Pancreas (tissue), 10 donors: ENCODE measurements at regions of chr6 and their contacts with region 1.

Region 1: DNA sequence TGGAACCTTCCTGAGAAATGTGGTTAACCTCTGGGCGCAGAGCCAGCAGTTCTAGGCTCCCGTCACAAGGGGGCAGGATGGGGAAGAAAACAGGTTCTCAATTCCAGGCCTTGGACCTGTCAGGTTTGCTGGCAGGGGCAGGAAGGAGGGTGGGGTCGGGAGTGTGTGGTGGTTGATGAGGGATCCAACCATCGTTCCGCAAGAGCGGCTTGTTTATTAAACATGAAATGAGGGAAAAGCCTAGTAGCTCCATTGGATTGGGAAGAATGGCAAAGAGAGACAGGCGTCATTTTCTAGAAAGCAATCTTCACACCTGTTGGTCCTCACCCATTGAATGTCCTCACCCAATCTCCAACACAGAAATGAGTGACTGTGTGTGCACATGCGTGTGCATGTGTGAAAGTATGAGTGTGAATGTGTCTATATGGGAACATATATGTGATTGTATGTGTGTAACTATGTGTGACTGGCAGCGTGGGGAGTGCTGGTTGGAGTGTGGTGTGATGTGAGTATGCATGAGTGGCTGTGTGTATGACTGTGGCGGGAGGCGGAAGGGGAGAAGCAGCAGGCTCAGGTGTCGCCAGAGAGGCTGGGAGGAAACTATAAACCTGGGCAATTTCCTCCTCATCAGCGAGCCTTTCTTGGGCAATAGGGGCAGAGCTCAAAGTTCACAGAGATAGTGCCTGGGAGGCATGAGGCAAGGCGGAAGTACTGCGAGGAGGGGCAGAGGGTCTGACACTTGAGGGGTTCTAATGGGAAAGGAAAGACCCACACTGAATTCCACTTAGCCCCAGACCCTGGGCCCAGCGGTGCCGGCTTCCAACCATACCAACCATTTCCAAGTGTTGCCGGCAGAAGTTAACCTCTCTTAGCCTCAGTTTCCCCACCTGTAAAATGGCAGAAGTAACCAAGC is 29.6 kb downstream of the SRSF3 start:
- DNase-seq: peak; percentile 80 to 94 (median 92)
- ATAC-seq: peak; percentile 73 to 85 (median 84)
- H3K4me3 ChIP-seq: no peak overlapping the region
- H3K27ac ChIP-seq: peak overlapping the region in 2 of 4 donors; percentile 12 to 25
- H3K4me1 ChIP-seq: peaks cover 0 to 21% (median 5%) of the 10 kb centered on the region in 3 donors
- H3K27me3 ChIP-seq: no peaks in the 10 kb centered on the region
- CTCF ChIP-seq: peak; percentile 79 to 86 (median 80)

Region 2: DNA sequence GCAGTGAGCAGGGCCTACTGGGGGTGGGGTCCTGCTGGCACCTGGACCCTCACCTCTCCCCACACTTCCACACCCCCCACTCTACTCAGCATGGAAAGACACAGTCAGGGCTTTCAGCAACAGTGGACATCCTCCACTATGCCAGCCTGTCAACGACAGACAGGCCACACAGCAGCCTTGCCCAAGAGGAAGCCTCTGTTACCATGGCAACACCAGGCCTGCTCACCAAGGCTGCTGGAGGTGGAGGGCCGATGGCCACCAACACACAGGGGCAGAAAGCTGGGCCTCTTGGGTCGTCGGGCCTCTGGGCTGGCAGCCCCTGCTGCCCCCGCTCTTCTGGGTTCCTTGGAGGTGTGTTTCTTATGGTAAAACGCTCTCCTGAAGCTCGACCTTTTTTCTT is 300.7 kb before region 1 on chr6:
- intact Hi-C with region 1: no loop called
- DNase-seq: no peak
- ATAC-seq: peak in 1 of 4 donors; percentile 7
- H3K4me3 ChIP-seq: no peak overlapping the region
- H3K27ac ChIP-seq: no peak overlapping the region
- H3K4me1 ChIP-seq: peaks cover 0 to 7% (median 0%) of the 10 kb centered on the region in 3 donors
- H3K27me3 ChIP-seq: no peaks in the 10 kb centered on the region
- CTCF ChIP-seq: no peak

Region 3: DNA sequence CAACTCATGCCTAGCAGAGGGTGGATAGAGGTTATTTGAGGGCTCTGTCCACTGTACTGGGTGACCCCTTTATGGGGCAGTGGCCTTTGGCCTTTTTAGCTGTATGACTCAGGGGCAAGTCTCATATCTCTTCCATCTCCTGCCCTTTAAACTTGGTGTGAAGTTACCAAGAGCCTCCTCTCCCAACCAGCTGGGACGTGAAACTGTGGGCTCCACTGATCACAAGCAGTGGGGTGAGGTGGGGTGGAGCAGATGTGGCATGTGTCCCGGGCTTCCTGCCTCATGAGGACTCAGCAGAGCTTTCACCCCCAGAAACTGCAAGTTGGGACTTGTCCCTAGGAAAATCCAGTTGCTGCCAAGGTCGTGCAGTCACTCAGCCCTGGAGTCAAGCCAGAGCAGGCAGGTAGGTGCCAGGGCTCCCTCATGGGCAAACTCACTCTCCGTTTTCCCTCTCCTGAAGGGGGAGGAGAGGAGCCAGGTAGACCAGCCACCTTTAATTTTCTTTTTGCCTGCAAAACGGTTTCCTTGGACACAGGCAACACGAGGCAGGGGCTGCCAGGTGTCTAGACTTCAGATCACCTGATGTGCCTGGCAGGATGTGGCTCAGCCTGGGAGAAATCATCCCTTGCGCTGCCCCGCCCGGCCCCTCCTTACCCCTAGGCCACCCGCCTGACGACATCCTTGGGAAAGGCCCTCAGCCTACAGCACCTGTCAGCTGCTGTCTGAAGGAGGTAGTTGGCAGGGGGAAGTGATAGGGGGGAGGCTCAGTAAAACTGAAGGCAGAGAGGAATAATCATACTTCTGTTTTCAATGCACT is 58.7 kb after region 1 on chr6:
- intact Hi-C with region 1: loop called in 2 of 3 experiments (anchors 5 kb)
- DNase-seq: peak; percentile 84 to 95 (median 93)
- ATAC-seq: peak; percentile 8 to 46 (median 34)
- H3K4me3 ChIP-seq: peak overlapping the region in 2 of 4 donors; percentile 76 to 82
- H3K27ac ChIP-seq: peak overlapping the region; percentile 33 to 97 (median 77)
- H3K4me1 ChIP-seq: peaks cover 13 to 33% (median 24%) of the 10 kb centered on the region in 3 donors
- H3K27me3 ChIP-seq: no peaks in the 10 kb centered on the region
- CTCF ChIP-seq: no peak

Region 4: GRCh38 chr6:36724514-36725390 is 100.9 kb after region 1 on chr6:
- intact Hi-C with region 1: loop called in 2 of 3 experiments (anchors 5 to 10 kb)
- DNase-seq: peak; percentile 76 to 88 (median 83)
- ATAC-seq: peak; percentile 84 to 97 (median 92)
- H3K4me3 ChIP-seq: no peak overlapping the region
- H3K27ac ChIP-seq: no peak overlapping the region
- H3K4me1 ChIP-seq: no peaks in the 10 kb centered on the region
- H3K27me3 ChIP-seq: no peaks in the 10 kb centered on the region
- CTCF ChIP-seq: peak in 3 of 4 donors; percentile 19 to 46 (median 39)